ENCODE measurements at regions of chr17 and their contacts with region 1.

Region 1: GRCh38 chr17:80981062-80981902 is 10.4 kb upstream of the CHMP6 start:
- DNase-seq: no peak
- ATAC-seq: peak; percentile 50
- H3K4me3 ChIP-seq: no peak overlapping the region
- H3K27ac ChIP-seq: no peak overlapping the region
- H3K4me1 ChIP-seq: no peaks in the 10 kb centered on the region
- H3K27me3 ChIP-seq: no peaks in the 10 kb centered on the region

Region 2: DNA sequence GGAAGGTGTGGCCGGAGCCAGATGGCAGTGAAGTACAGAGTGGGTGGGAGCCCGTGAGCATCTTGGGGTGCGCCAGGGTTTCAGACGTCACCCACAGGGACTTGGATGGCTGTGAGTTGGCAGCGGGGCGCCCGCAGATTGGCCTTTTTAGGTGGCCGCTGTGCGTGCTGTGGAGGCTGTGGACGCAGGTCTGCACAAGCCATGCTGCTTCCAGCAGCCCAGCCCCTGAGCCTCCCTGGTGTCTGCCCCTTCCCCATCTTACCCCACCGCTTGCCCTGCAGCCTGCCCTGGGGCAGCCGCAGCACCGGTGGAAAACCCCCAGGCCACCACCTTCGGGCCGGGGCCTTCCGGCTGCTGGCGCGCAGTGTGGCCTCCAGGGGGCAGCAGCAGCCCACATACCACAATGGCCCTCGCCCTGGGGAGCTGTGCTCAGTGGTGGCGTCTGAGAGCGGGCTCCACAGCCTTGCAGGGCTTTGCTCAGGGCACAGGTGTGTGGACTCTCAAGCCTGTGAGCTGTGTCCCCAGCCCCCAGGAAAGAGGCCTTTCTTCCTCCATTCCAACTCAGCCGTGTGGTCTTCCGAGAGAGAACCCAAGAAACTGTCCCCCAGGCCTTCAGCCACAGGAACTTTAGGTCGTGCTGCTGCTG is 554.5 kb before region 1 on chr17:
- intact Hi-C with region 1: loop called (anchors 2 to 5 kb)
- DNase-seq: peak; percentile 76 to 93
- ATAC-seq: peak; percentile 82
- H3K4me3 ChIP-seq: no peak overlapping the region
- H3K27ac ChIP-seq: no peak overlapping the region
- H3K4me1 ChIP-seq: no peaks in the 10 kb centered on the region
- H3K27me3 ChIP-seq: no peaks in the 10 kb centered on the region

Region 3: DNA sequence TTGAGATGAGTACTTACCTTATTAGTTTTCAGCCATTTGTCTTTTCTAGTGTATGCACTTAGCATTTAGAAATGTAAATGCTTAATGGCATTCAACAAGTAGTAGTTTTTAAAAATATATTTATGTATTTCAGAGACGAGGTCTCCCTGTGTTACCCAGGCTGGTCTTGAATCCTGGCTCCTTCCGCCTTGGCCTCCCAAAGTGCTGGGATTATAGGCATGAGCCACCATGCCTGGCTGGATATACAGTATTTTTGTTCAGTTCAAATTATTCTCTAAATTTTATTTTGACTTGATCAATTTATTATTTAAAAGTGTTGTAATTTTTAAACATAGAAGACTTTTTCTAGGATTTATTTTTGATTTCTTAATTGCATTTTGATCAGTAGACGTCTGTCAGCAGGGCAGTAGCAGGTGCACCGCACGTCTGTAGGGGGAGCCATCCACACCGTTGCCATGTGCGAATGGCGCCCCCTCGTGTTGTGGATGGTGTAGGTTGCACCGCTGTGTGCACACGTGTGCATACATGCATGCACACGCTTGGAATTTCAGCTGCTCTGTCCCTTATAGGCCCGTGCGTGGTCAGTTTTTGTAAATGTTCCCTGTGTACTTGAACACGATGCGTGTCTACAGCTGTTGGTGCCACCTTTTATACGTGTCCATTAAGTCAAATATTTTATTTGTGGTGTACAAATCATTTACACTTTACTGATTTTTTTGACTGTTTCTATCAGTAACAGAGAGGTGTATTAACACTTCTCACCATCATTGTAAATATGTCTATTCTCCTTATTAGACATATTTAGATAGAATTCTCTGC is 406.0 kb before region 1 on chr17:
- intact Hi-C with region 1: loop called in 1 of 2 experiments (anchors 10 kb)
- DNase-seq: peak; percentile 90 to 93
- ATAC-seq: peak; percentile 91
- H3K4me3 ChIP-seq: no peak overlapping the region
- H3K27ac ChIP-seq: no peak overlapping the region
- H3K4me1 ChIP-seq: no peaks in the 10 kb centered on the region
- H3K27me3 ChIP-seq: no peaks in the 10 kb centered on the region

Region 4: DNA sequence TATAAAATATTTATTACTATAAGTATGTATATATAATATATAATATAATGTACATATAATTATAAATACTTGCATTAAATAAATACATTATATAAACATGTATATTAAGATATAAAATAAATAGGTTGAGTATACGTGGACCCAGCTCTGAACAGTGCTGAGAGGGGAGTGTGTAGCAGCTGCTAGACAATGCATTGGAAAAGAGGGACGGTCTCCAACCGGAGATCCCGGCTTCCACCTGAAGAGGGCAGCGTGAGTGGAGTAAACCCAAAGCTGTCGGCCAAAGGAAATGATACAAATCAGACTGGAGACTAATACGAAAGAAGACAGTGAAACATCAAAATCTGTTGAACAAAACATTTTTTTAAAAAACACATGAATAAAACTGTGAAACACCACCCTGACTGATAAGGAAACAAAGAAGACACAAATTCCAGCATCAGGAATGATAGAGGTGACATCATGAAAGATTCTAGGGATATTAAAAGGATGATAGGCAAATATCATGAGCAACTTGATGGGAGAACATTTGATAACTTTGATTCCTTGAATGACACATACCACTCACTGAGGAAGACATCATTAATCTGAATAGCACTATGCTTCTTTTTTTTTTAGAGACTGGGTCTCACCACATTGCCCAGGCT is 115.0 kb before region 1 on chr17:
- intact Hi-C with region 1: loop called (anchors 5 kb)
- DNase-seq: peak; percentile 81 to 90
- ATAC-seq: no peak
- H3K4me3 ChIP-seq: no peak overlapping the region
- H3K27ac ChIP-seq: no peak overlapping the region
- H3K4me1 ChIP-seq: no peaks in the 10 kb centered on the region
- H3K27me3 ChIP-seq: no peaks in the 10 kb centered on the region

Region 5: DNA sequence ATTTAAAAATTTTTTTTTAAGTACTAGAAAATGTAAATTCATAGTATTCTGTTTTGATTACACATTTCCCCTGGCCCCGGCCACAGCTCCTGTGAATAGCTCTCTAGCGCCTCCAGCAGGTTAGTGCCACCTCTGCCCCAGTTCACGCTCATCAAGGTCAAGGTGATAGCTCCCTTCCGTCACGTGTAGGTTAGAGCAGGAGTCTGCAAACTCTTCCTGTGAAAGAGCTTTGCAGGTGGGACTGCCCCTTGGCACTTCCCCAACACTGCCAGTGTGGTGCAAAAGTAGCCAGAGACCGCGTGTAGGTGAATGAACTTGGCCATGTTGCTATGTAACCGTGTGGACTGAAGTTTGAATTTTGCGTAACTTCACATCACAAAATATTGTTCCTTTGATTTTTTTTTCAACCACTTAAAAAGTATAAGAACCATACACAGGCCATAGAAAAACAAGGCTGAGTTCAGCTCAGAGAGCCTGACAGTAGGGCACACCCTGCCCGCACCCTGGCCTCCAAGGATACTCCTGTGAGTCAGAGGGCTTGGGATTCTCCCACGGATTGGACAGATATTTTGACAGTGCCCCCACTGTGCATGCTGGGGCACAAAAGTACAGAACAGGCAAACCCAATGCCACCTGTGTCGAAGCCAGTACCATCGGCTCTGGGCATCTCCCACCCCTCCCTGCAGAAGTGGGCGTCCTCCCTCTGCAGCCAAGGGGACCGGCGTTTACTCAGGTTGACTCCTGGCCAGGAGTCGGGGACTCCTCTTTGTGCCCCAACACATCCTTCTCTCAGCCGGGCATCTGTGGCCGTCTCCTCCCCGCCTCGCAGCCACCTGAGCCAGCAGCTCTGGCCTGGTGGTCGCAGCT is 81.6 kb before region 1 on chr17:
- intact Hi-C with region 1: loop called in 1 of 2 experiments (anchors 5 kb)
- DNase-seq: no peak
- ATAC-seq: no peak
- H3K4me3 ChIP-seq: no peak overlapping the region
- H3K27ac ChIP-seq: no peak overlapping the region
- H3K4me1 ChIP-seq: no peaks in the 10 kb centered on the region
- H3K27me3 ChIP-seq: no peaks in the 10 kb centered on the region

Region 6: GRCh38 chr17:81030741-81031565 is 49.7 kb after region 1 on chr17:
- intact Hi-C with region 1: no loop called
- DNase-seq: peak; percentile 42 to 77
- ATAC-seq: no peak
- H3K4me3 ChIP-seq: no peak overlapping the region
- H3K27ac ChIP-seq: no peak overlapping the region
- H3K4me1 ChIP-seq: peaks cover 0 to 2% of the 10 kb centered on the region in 2 donors
- H3K27me3 ChIP-seq: peaks cover 0 to 2% of the 10 kb centered on the region in 2 donors

Region 7: GRCh38 chr17:81346090-81346907 is 365.0 kb after region 1 on chr17:
- intact Hi-C with region 1: no loop called
- DNase-seq: peak; percentile 99
- ATAC-seq: peak; percentile 90
- H3K4me3 ChIP-seq: peak overlapping the region in 1 of 2 donors; percentile 91
- H3K27ac ChIP-seq: peak overlapping the region in 1 of 2 donors; percentile 47
- H3K4me1 ChIP-seq: no peaks in the 10 kb centered on the region
- H3K27me3 ChIP-seq: no peaks in the 10 kb centered on the region

Measured in aorta (tissue), 5 donors.